Thyroid gland (tissue), 4 donors: ENCODE measurements at regions of chr7 and their contacts with region 1.

Region 1: DNA sequence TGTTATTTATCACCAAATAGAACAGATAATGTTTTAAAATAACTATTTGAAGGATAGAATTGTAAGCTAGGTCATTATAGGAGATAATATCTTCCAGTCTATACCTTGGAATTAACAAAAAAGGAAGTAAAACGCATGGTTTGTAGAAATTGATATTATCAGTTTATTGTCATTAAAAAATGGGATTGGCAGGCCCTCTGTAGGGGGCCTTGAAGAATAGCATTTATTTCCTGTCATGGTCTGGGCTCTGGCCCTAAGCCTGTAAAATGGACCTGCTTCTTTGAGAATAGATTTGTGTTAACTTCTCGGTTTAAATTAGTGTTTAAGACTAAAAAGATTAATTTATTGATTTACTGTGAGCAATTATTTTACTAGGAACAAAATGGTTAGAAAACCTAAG is 197.6 kb upstream of the FOXP2 start:
- DNase-seq: no peak
- H3K4me3 ChIP-seq: no peak overlapping the region
- H3K27ac ChIP-seq: no peak overlapping the region
- H3K4me1 ChIP-seq: peaks cover 0 to 10% of the 10 kb centered on the region in 2 donors
- H3K27me3 ChIP-seq: no peaks in the 10 kb centered on the region
- CTCF ChIP-seq: peak in 1 of 6 experiments; percentile 12
- POLR2A ChIP-seq: no peak

Region 2: DNA sequence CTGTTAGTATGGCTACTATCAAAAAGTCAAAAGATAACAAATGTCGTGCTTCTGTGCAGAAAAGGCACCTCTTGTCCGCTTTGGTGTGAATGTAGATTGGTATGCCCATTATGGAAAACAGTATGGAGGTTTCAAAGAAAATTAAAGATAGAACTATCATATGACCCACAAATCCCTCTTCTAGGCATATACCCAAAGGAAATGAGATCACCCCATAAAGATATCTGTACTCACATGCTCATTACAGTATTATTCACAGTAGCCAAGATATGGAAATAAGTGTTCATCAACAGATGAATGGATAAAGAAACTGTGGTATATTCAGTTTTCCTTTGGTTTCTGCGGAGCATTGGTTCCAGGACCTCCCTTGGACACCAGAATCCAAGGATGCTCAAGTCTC is 117.7 kb before region 1 on chr7:
- intact Hi-C with region 1: loop called (anchors 10 kb)
- DNase-seq: no peak
- H3K4me3 ChIP-seq: no peak overlapping the region
- H3K27ac ChIP-seq: no peak overlapping the region
- H3K4me1 ChIP-seq: peaks cover 0 to 7% of the 10 kb centered on the region in 2 donors
- H3K27me3 ChIP-seq: no peaks in the 10 kb centered on the region
- CTCF ChIP-seq: no peak
- POLR2A ChIP-seq: no peak